Prostate gland (tissue), 2 donors: ENCODE measurements at regions of chr18 and their contacts with region 1.

Region 1: DNA sequence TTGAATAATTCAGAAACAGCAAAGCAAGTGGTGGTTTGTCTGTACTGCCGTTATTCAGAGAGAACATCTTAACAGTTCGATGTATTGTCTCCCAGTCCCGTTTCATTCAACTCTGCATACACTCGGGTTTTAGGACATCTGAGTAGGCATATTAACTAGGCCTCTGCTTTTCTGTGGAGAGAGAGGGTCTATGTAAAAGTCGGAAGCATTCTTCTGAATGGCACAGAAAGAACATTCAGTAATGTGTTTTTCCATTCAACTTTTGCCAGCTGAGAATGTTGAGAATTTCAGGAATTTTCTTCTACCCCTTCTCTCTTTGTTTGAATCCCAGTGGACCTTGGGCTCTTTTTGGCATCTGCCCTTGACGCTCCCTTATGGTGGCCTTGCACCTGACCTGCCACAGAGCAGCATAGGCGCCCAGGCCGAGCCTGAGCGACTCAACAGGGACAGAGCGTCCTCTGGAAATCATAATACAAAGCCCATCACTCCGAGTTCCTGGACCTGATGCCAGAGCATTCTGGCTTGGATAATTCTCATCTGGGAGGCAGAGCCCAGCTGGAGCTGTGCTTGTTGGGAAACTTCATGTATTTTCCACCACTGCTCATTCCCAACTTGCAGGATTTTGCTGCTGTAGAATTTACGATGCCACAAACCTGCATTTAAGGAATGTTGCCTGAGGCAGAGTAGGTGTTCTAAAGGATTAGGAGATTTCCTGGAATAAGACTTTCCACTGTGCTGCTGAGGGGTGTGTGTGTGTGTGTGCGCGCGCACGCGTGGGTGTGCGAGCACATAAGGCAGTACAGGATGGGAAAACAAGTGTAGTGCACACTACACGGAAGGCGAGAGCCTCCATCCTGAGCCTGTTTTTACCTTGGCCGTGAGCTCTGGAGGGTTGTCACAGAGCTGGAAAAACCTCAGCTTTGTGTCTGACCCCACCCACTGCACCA is 77.2 kb upstream of the TXNDC2 start:
- DNase-seq: peak; percentile 27
- H3K4me3 ChIP-seq: no peak overlapping the region
- H3K27ac ChIP-seq: peak overlapping the region; percentile 50 to 59
- H3K4me1 ChIP-seq: peaks cover 13% of the 10 kb centered on the region
- H3K27me3 ChIP-seq: no peaks in the 10 kb centered on the region
- CTCF ChIP-seq: no peak
- POLR2A ChIP-seq: no peak

Region 2: DNA sequence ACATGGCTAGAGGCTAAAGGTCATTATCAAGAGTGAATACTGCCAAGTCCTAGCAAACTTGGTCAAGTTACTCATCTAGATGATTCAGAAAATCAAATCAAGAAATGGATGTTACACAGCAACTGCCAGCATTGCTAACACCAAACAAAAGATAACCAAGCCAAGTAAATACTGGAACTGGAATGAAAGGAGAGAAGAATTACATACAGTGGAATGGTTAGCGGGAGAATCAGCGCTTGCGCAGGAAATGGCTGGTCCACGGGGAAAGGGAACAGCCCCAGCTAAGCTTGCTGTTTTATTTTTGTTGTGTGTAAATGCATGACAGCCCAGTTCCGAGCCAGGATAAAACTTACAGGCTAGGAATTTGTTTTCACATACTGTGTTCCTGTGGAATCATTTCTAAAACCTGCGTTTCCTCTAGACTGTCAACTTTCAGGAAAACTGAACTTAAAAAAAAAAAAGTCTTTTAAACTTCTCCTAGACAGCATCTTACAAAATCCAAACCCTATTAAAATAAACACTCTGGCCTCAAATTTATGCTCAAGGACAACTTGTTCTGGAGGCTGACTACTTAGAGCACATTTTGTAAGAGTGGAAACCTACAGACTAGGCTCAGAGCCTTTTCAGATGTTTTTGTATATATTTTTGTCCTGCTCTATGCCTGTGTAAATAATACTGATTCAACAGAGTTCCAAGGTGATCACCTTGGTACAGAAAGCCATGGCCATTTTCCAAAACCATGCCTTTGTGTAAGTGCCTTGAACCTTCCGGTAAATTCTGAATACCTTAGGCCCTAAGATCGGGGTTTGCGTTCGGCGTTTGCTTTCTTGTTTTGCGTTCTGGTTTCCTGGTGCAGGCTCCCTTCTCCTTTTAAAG is 46.5 kb after region 1 on chr18:
- intact Hi-C with region 1: loop called (anchors 5 kb)
- DNase-seq: no peak
- H3K4me3 ChIP-seq: no peak overlapping the region
- H3K27ac ChIP-seq: peak overlapping the region; percentile 63 to 69
- H3K4me1 ChIP-seq: no peaks in the 10 kb centered on the region
- H3K27me3 ChIP-seq: no peaks in the 10 kb centered on the region
- CTCF ChIP-seq: no peak
- POLR2A ChIP-seq: no peak

Region 3: GRCh38 chr18:10525371-10526210 is 717.0 kb after region 1 on chr18 and contains the start of gene NAPG:
- intact Hi-C with region 1: loop called (anchors 10 kb)
- DNase-seq: peak; percentile 78
- H3K4me3 ChIP-seq: peak within 1 kb of the TSS; percentile 85 to 89
- H3K27ac ChIP-seq: peak within 1 kb of the TSS; percentile 85 to 92
- H3K4me1 ChIP-seq: no peaks in the 10 kb centered on the region
- H3K27me3 ChIP-seq: no peaks in the 10 kb centered on the region
- CTCF ChIP-seq: peak in 1 of 4 experiments; percentile 22
- POLR2A ChIP-seq: peak; percentile 38
- total RNA-seq, gene NAPG: 23.2 to 47.5 TPM